ENCODE measurements at regions of chr19 and their contacts with region 1.

Region 1: GRCh38 chr19:19663256-19664038 is at the start of gene ATP13A1:
- DNase-seq: peak; percentile 95 to 97
- ATAC-seq: peak; percentile 97 to 98 (median 98)
- H3K4me3 ChIP-seq: peak within 1 kb of the TSS; percentile 77 to 100 (median 93)
- H3K27ac ChIP-seq: peak within 1 kb of the TSS; percentile 86 to 98 (median 92)
- H3K4me1 ChIP-seq: peaks cover 5 to 38% (median 20%) of the 10 kb centered on the region in 9 donors
- H3K27me3 ChIP-seq: no peaks in the 10 kb centered on the region
- CTCF ChIP-seq: peak in 4 of 9 donors; percentile 9 to 42 (median 16)
- total RNA-seq, gene ATP13A1: 12.3 to 28.2 (median 18.4) TPM

Region 2: GRCh38 chr19:19514215-19514633 is 149.2 kb before region 1 on chr19:
- intact Hi-C with region 1: no loop called
- DNase-seq: peak; percentile 85 to 93
- ATAC-seq: peak; percentile 21 to 62 (median 44)
- H3K4me3 ChIP-seq: peak overlapping the region in 9 of 10 donors; percentile 16 to 43 (median 33)
- H3K27ac ChIP-seq: peak overlapping the region in 1 of 10 donors; percentile 20
- H3K4me1 ChIP-seq: peaks cover 5 to 40% (median 28%) of the 10 kb centered on the region in 9 donors
- H3K27me3 ChIP-seq: no peaks in the 10 kb centered on the region
- CTCF ChIP-seq: no peak

Region 3: DNA sequence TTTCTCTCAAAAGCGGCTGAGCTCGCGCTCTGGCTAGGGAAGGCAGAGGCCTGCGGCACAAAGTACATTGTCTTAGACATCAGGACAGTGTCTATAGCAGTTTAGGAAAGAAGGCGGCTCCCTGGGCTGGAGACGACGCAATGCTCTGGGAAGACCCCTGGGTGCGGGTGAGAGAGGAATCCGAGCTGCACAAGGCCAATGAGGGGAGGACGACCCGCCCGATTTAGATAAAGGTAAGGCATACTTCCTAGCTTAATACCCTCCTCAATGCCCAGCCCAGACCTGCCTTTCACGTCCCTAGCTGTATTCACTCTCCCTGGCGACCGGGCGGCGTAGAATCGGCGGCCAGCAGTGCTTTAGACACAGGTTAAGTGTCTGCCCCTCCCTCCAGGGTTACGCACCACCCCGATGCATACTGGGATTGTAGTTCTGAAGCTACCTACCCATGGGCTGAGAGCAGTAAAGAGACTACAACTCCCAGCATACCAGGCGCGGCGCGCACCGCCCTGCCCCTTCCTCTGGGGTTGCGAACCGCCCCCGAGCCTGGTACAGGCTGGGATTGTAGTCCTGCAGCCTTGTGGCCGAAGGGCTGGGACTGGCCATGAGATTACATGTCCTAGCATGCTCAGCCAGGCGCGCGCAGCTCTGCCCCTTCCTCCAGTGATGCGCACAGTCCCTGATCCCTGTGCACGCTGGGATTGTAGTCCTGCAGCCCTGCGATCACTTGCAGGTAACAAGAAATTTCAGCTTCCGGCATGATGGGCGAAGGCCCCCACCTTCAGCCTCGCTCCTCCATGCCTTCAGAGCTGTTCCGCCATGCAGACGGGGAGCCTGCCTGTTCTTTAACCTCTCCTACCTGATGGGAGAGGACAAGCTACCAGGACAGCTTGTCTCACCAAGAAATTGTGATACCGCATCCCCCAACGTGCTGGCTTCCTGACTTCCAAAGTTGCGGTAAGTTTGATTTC is 112.9 kb after region 1 on chr19:
- intact Hi-C with region 1: loop called in 1 of 10 experiments (anchors 5 kb)
- DNase-seq: peak; percentile 96 to 98
- ATAC-seq: peak; percentile 100
- H3K4me3 ChIP-seq: peak overlapping the region; percentile 43 to 87 (median 76)
- H3K27ac ChIP-seq: peak overlapping the region in 9 of 10 donors; percentile 35 to 87 (median 75)
- H3K4me1 ChIP-seq: peaks cover 7 to 29% (median 20%) of the 10 kb centered on the region in 9 donors
- H3K27me3 ChIP-seq: no peaks in the 10 kb centered on the region
- CTCF ChIP-seq: peak in 4 of 9 donors; percentile 12 to 35 (median 18)

Measured in heart right ventricle (tissue), 16 donors.